ENCODE measurements at regions of chr17 and their contacts with region 1.

Region 1: DNA sequence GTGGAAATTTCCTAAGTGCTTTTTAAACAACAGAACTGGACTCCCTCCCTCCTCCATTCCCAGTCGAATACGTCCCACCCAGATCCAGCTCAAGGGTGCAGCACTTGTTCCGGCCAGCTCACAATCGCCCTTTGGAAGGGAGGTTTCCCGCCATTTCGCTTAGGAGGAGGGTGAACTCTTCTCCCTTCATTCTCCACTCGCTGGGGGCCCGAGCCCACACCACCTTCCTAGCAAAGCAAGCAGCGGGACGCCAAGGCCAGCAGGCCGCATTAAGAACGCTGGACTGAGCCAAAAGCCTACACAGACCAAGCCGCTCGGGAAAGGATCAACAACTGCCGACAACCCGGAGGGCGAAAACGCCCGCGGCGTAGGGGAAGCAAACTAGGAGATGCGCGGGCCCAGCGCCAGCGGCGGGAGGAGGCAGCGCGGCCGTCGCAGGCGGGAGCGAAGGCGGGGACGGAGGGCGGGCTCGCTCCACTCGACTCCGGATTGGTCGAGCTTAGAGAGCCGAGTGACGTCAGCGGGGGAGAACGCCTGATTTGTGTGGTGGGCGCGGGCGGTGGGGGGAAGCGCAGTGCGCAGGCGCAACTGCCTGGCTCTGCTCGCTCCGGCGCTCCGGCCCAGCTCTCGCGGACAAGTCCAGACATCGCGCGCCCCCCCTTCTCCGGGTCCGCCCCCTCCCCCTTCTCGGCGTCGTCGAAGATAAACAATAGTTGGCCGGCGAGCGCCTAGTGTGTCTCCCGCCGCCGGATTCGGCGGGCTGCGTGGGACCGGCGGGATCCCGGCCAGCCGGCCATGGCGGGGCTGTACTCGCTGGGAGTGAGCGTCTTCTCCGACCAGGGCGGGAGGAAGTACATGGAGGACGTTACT is at the start of gene PPM1D:
- DNase-seq: peak; percentile 98 to 99 (median 99)
- H3K4me3 ChIP-seq: peak within 1 kb of the TSS; percentile 94 to 100 (median 97)
- H3K27ac ChIP-seq: peak within 1 kb of the TSS; percentile 77 to 91
- H3K4me1 ChIP-seq: peaks cover 27 to 48% (median 40%) of the 10 kb centered on the region in 4 experiments
- H3K27me3 ChIP-seq: no peaks in the 10 kb centered on the region

Region 2: DNA sequence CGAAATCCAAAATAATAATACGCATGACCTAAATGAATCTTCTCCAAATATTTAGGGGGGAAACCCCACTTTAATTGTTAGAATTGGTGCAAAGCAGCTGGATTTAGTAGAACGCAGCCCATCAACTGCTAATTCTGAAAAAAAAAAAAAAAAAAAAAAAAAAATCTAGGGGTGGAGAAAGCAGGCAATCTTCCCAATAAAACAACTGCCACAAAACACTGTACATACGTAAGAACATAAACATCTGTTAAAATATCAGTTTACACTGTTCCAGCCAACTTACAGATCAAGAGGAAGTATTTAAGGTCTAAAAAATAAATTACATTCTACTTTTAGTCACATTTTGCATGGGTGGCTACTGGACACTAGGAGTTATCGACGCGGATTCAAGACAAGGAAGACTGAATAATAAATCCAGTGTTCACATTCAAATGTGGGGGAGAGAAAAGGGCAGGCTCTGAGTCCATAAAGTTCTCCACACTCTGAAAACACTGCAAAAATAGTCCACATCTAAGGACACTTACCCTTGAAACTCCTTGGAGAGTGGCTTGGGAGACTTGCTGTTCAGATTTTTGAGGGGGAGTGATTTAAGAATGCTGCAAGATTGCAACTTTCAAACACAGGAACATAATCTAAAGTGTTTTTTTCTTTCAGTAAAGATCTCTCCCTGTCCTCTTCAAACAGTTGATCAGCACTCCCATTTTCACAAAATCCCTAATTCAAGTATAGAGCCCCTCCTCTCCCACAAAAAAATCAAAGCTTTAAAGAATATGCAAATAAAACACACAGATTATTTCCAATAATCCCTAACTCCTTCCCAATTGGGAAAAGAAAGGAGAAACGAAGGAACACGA is 75.2 kb before region 1 on chr17:
- CTCF ChIA-PET with region 1: interaction called, 10 read pairs
- POLR2A ChIA-PET with region 1: no interaction called
- DNase-seq: peak in 2 of 3 donors; percentile 13 to 28
- H3K4me3 ChIP-seq: peak overlapping the region; percentile 86 to 100 (median 97)
- H3K27ac ChIP-seq: peak overlapping the region; percentile 91 to 95
- H3K4me1 ChIP-seq: peaks cover 15 to 29% (median 18%) of the 10 kb centered on the region in 4 experiments
- H3K27me3 ChIP-seq: no peaks in the 10 kb centered on the region

Region 3: DNA sequence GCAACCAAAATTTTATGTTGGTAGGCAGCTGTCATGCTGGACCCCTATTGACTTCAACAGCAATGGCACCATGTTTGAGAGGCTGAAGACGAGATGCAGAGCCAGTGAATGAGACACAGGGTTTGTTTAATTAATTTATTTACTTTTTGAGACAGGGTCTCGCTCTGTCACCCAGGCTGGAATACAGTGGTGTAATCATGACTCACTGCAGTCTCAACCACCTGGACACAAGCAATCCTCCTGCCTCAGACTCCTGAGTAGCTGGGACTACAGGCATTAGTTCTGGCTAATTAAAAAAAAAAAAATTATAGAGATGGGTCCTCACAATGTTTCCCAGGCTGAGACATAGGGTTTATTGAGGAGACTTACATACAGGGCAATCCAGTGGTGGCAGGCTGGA is 36.1 kb before region 1 on chr17:
- CTCF ChIA-PET with region 1: no interaction called
- POLR2A ChIA-PET with region 1: no interaction called
- DNase-seq: no peak
- H3K4me3 ChIP-seq: no peak overlapping the region
- H3K27ac ChIP-seq: no peak overlapping the region
- H3K4me1 ChIP-seq: no peaks in the 10 kb centered on the region
- H3K27me3 ChIP-seq: no peaks in the 10 kb centered on the region

Region 4: DNA sequence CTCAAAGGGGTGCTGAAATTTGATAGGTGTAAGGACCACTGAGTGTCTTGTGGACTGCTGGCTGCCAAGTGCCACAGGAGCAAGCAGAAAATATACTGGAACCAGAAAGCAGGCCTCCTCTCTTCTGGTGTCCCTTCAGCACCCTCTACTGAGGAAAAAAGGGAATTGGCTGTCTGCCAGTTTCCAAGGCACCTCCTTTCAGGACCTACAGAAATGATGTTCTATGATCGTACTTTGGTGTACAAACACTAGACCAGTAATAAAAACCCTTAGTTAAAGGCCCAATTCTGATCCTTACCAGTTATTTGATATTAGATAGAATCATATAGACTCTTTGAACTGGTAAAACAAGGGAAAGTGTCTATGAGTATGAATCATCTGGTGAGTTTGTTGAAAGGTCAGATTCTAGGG is 42.0 kb after region 1 on chr17:
- CTCF ChIA-PET with region 1: interaction called, 12 read pairs
- POLR2A ChIA-PET with region 1: no interaction called
- DNase-seq: peak; percentile 83 to 90 (median 87)
- H3K4me3 ChIP-seq: no peak overlapping the region
- H3K27ac ChIP-seq: no peak overlapping the region
- H3K4me1 ChIP-seq: peaks cover 0 to 3% (median 1%) of the 10 kb centered on the region in 4 experiments
- H3K27me3 ChIP-seq: no peaks in the 10 kb centered on the region

Measured in common myeloid progenitor, CD34-positive (primary cell).